ENCODE measurements at regions of chr19 and their contacts with region 1.

Region 1: DNA sequence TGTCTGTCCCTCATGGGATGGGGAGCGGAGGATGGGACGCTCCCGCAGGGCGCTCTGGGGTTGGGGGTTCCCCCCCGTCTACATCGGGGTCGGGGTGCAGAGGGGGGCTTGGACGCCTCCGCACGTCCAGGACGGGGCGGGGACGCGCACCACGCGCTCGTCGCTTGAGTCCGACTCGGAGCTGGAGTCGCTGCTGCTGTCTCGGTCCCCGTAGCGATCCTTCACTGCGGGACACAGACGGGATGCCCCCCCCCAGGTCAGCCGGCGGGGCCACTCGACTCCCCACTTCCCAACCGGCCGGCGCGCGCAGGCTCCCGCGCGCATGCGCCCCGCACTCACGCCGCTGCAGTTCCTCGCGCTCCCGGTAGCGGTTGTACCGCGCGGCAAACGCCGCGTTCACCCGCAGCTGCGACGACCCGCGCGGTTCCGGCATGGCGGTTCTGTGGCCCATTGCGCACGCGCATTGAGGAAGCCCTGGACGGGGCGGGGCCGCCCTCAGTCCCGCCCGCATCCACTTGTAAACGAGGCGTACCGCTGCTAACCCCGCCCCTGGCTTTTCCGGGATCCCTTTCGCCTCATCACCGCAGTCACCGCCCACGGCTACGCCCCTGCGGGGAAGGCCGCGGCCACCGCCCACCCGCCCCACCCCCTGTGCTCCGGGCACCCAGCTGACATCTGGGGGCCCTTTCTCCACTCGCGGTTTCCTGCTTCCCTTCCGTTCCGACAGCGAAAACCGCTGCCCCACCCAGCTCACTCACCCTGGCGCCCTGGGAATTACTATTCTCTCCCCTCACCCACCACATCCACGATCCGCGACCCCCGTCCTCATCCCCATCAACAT is at the start of gene KRI1:
- DNase-seq: peak; percentile 97 to 100 (median 99)
- ATAC-seq: peak; percentile 54
- H3K4me3 ChIP-seq: peak within 1 kb of the TSS; percentile 95 to 97
- H3K4me3 Mint-ChIP-seq: peak within 1 kb of the TSS; percentile 98
- H3K27ac ChIP-seq: peak within 1 kb of the TSS; percentile 83 to 85
- H3K27ac Mint-ChIP-seq: peak within 1 kb of the TSS; percentile 95
- H3K4me1 ChIP-seq: peaks cover 28% of the 10 kb centered on the region
- H3K4me1 Mint-ChIP-seq: peaks cover 48% of the 10 kb centered on the region
- H3K27me3 ChIP-seq: no peaks in the 10 kb centered on the region
- H3K27me3 Mint-ChIP-seq: no peaks in the 10 kb centered on the region
- CTCF ChIP-seq: no peak
- total RNA-seq, gene KRI1: 29.8 to 33.9 TPM

Region 2: GRCh38 chr19:10332955-10333757 is 232.6 kb before region 1 on chr19 and contains the start of gene RAVER1:
- CTCF ChIA-PET with region 1: no interaction called
- POLR2A ChIA-PET with region 1: no interaction called
- intact Hi-C with region 1: loop called in 1 of 2 experiments (anchors 5 kb)
- DNase-seq: peak; percentile 94 to 99 (median 98)
- ATAC-seq: peak; percentile 96
- H3K4me3 ChIP-seq: peak within 1 kb of the TSS; percentile 93 to 97
- H3K4me3 Mint-ChIP-seq: peak within 1 kb of the TSS; percentile 95
- H3K27ac ChIP-seq: peak within 1 kb of the TSS; percentile 76 to 95
- H3K27ac Mint-ChIP-seq: peak within 1 kb of the TSS; percentile 93
- H3K4me1 ChIP-seq: peaks cover 30% of the 10 kb centered on the region
- H3K4me1 Mint-ChIP-seq: peaks cover 35% of the 10 kb centered on the region
- H3K27me3 ChIP-seq: no peaks in the 10 kb centered on the region
- H3K27me3 Mint-ChIP-seq: no peaks in the 10 kb centered on the region
- CTCF ChIP-seq: no peak
- total RNA-seq, gene RAVER1: 33.3 to 33.6 TPM

Region 3: GRCh38 chr19:10502524-10503001 is 63.2 kb before region 1 on chr19:
- CTCF ChIA-PET with region 1: interaction called, 7 read pairs
- POLR2A ChIA-PET with region 1: interaction called, 3 read pairs
- intact Hi-C with region 1: loop called in 1 of 2 experiments (anchors 2 kb)
- DNase-seq: peak; percentile 74 to 93 (median 87)
- ATAC-seq: peak; percentile 90
- H3K4me3 ChIP-seq: peak overlapping the region; percentile 83 to 96
- H3K4me3 Mint-ChIP-seq: peak overlapping the region; percentile 83
- H3K27ac ChIP-seq: peak overlapping the region; percentile 73 to 75
- H3K27ac Mint-ChIP-seq: peak overlapping the region; percentile 71
- H3K4me1 ChIP-seq: peaks cover 11% of the 10 kb centered on the region
- H3K4me1 Mint-ChIP-seq: peaks cover 31% of the 10 kb centered on the region
- H3K27me3 ChIP-seq: no peaks in the 10 kb centered on the region
- H3K27me3 Mint-ChIP-seq: no peaks in the 10 kb centered on the region
- CTCF ChIP-seq: no peak

Region 4: GRCh38 chr19:10523135-10523636 is 42.6 kb before region 1 on chr19:
- CTCF ChIA-PET with region 1: no interaction called
- POLR2A ChIA-PET with region 1: no interaction called
- intact Hi-C with region 1: no loop called
- DNase-seq: peak in 4 of 9 experiments; percentile 23 to 92 (median 67)
- ATAC-seq: peak; percentile 68
- H3K4me3 ChIP-seq: no peak overlapping the region
- H3K4me3 Mint-ChIP-seq: no peak overlapping the region
- H3K27ac ChIP-seq: peak overlapping the region in 1 of 2 experiments; percentile 77
- H3K27ac Mint-ChIP-seq: no peak overlapping the region
- H3K4me1 ChIP-seq: peaks cover 15% of the 10 kb centered on the region
- H3K4me1 Mint-ChIP-seq: peaks cover 18% of the 10 kb centered on the region
- H3K27me3 ChIP-seq: peaks cover 3 to 9% of the 10 kb centered on the region in 2 experiments
- H3K27me3 Mint-ChIP-seq: peaks cover 12% of the 10 kb centered on the region
- CTCF ChIP-seq: no peak

Region 5: DNA sequence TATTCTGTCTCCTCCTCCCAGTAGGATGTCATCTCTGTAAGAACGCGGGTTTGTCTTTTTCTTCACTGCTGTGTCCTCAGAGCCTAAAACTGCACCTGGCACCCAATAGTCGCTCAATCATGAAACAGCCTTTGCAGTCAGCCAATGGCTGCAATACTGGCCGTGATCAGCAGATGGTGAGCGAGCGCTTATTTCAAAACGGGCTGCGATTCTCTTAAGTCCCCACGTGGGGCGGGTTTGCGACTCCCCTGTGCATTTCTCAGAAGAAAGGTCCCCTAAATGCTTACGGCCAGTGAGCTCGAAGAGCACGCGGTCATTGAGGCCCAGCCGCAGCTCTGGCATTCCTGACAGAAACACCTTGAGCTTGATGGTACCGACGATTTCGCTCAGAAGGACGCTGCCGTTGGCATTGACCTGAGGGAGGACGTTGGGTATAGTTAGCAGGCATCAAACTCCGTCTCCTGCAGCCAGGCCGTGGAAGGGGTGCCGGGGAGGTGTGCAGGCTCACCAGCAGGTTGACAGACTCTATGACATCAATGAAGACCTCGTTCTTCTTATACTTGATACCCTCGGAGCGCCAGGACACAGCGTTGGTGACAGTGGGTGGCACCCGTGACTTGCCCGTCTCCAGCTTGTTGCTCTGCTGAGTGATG is 15.3 kb after region 1 on chr19:
- CTCF ChIA-PET with region 1: interaction called, 16 read pairs
- POLR2A ChIA-PET with region 1: no interaction called
- intact Hi-C with region 1: no loop called
- DNase-seq: peak; percentile 81 to 93 (median 92)
- ATAC-seq: peak; percentile 100
- H3K4me3 ChIP-seq: no peak overlapping the region
- H3K4me3 Mint-ChIP-seq: no peak overlapping the region
- H3K27ac ChIP-seq: no peak overlapping the region
- H3K27ac Mint-ChIP-seq: no peak overlapping the region
- H3K4me1 ChIP-seq: peaks cover 4% of the 10 kb centered on the region
- H3K4me1 Mint-ChIP-seq: peaks cover 11% of the 10 kb centered on the region
- H3K27me3 ChIP-seq: no peaks in the 10 kb centered on the region
- H3K27me3 Mint-ChIP-seq: no peaks in the 10 kb centered on the region
- CTCF ChIP-seq: peak; percentile 99

Region 6: GRCh38 chr19:10653715-10654492 is 88.1 kb after region 1 on chr19 and contains the start of gene ILF3:
- CTCF ChIA-PET with region 1: no interaction called
- POLR2A ChIA-PET with region 1: interaction called, 11 read pairs
- intact Hi-C with region 1: loop called (anchors 1 kb)
- DNase-seq: peak; percentile 100
- ATAC-seq: peak; percentile 77
- H3K4me3 ChIP-seq: peak within 1 kb of the TSS; percentile 83
- H3K4me3 Mint-ChIP-seq: peak within 1 kb of the TSS; percentile 94
- H3K27ac ChIP-seq: peak within 1 kb of the TSS; percentile 98 to 99
- H3K27ac Mint-ChIP-seq: peak within 1 kb of the TSS; percentile 98
- H3K4me1 ChIP-seq: peaks cover 41% of the 10 kb centered on the region
- H3K4me1 Mint-ChIP-seq: peaks cover 44% of the 10 kb centered on the region
- H3K27me3 ChIP-seq: no peaks in the 10 kb centered on the region
- H3K27me3 Mint-ChIP-seq: no peaks in the 10 kb centered on the region
- CTCF ChIP-seq: no peak
- total RNA-seq, gene ILF3: 604 to 613 TPM

Region 7: GRCh38 chr19:10870955-10871603 is 305.3 kb after region 1 on chr19 and contains the start of gene CARM1:
- CTCF ChIA-PET with region 1: no interaction called
- POLR2A ChIA-PET with region 1: interaction called, 4 read pairs
- intact Hi-C with region 1: loop called (anchors 1 to 5 kb)
- DNase-seq: peak; percentile 97 to 99 (median 99)
- ATAC-seq: peak; percentile 87
- H3K4me3 ChIP-seq: peak within 1 kb of the TSS; percentile 59 to 62
- H3K4me3 Mint-ChIP-seq: peak within 1 kb of the TSS; percentile 89
- H3K27ac ChIP-seq: peak within 1 kb of the TSS; percentile 37 to 76
- H3K27ac Mint-ChIP-seq: peak within 1 kb of the TSS; percentile 84
- H3K4me1 ChIP-seq: peaks cover 17% of the 10 kb centered on the region
- H3K4me1 Mint-ChIP-seq: peaks cover 19% of the 10 kb centered on the region
- H3K27me3 ChIP-seq: no peaks in the 10 kb centered on the region
- H3K27me3 Mint-ChIP-seq: no peaks in the 10 kb centered on the region
- CTCF ChIP-seq: no peak
- total RNA-seq, gene CARM1: 18.1 to 21.3 TPM

Measured in CD8-positive, alpha-beta T cell (primary cell).